AG04450 (cell line): ENCODE measurements at regions of chr10 and their contacts with region 1.

Region 1: GRCh38 chr10:31864834-31865518 is 63.7 kb downstream of the ARHGAP12 start:
- DNase-seq: no peak
- H3K4me3 ChIP-seq: no peak overlapping the region
- H3K27ac ChIP-seq: no peak overlapping the region
- H3K27me3 ChIP-seq: no peaks in the 10 kb centered on the region
- CTCF ChIP-seq: no peak

Region 2: DNA sequence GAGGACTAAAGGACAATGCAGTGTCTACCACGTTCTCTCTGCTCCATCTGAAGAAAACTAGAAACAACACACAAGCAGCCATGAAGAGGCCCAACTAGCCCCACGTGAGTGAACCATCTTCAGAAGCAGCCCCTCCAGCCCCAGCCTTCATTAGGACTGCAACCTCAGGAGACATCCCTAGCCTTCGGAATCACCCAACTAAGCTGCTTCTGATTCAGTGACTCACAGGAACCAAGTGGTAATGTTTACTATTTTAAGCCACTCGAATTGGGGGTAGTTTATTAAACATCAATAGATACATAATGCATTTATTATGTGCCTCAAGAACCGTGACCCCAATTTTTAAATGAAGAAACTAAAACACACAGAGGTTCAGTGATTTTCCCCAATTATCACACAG is 41.1 kb after region 1 on chr10:
- CTCF ChIA-PET with region 1: no interaction called
- POLR2A ChIA-PET with region 1: no interaction called
- DNase-seq: no peak
- H3K4me3 ChIP-seq: no peak overlapping the region
- H3K27ac ChIP-seq: no peak overlapping the region
- H3K27me3 ChIP-seq: no peaks in the 10 kb centered on the region
- CTCF ChIP-seq: no peak

Region 3: DNA sequence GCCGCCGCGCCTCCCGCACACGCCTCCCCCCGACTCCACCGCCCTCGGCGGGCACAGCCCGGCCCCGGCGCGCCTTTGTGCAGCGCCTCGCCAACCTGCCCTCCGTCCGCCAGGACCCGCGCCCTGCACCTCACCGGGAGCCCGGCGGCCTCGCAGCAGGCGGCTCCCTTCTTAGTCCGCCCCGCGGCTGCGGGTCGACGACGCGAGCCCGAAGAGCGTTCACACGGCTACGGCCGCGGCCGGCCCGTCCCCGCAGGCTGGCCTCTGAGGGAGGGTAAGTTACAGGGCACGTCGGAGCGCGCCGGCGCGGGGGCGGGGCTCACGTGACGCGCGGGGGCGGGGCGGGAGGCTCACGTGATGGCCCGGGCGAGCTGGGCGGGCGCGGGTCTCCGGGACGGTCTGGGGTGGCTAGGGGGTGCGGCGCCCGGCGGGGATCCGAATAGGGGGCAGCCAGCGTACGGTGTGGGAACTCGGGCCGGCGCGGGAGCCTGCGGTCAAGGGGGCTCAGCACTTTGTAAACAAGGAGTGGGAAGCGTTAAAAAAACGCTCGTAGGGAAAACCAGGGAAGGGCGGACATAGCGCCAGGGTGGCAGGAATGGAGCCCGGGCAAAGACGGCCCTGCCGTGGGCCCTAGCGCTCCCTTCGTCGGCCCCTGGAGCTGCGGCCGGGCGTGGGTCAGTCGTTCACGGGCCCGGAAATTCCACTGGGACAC is 63.7 kb after region 1 on chr10 and contains the start of gene ARHGAP12:
- CTCF ChIA-PET with region 1: interaction called, 19 read pairs
- POLR2A ChIA-PET with region 1: interaction called, 7 read pairs
- DNase-seq: peak; percentile 37
- H3K4me3 ChIP-seq: peak within 1 kb of the TSS; percentile 83
- H3K27ac ChIP-seq: peak within 1 kb of the TSS; percentile 91
- H3K27me3 ChIP-seq: no peaks in the 10 kb centered on the region
- CTCF ChIP-seq: no peak
- polyA plus RNA-seq, gene ARHGAP12: 19.2 and 26.3 TPM in 2 replicates

Region 4: DNA sequence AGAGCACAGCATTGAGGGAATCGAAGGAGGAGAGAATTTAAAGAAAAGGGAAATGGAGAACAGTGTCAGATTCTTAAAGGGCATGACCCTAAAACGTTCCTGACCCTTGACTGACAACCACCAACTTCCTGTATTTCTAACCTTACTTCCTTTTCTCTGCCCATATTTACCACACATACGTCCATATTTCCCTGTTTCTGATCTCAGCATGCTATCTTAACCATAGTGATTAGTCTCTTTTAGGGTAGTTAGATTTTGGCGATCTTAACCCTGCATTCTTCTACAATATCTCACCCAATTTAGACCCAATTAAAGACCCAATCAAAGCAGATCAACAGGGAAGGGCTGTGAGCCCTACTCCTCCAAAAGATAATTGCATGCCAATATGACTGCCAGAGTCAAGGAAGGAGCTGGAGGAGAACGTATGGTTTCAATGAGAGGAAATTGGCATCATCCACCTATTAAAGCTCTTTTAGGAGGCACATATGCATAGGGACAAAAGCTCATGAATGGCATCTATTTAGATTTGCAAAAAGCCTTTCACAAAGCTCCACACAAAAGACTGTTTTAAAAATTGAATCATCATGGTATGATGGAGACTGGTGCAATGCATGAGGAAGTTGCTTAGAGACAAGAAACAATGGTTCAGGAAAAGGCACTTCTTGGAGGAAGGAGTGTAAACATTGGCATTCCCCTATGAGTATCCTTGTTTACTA is 112.6 kb after region 1 on chr10:
- CTCF ChIA-PET with region 1: no interaction called
- POLR2A ChIA-PET with region 1: no interaction called
- DNase-seq: no peak
- H3K4me3 ChIP-seq: no peak overlapping the region
- H3K27ac ChIP-seq: no peak overlapping the region
- H3K27me3 ChIP-seq: no peaks in the 10 kb centered on the region
- CTCF ChIP-seq: no peak

Region 5: DNA sequence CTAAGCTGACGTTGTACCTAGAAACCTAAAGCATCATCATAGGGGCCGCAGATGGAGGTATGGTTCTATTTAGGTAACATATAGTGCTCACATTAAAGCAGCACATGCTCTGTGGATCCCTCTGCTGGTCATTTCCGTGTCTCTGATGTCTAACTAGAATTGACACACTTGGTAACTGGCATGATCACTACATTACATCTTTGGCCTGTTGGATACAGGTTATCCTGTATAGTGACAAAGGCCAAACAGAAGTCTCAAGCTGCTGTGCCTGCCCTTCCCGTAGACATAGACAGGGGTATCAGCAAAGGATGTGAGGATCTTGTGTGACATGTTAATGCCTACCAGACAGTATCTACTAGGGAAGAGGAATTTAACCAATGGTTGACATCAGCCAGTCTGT is 140.1 kb after region 1 on chr10:
- CTCF ChIA-PET with region 1: interaction called, 37 read pairs
- POLR2A ChIA-PET with region 1: no interaction called
- DNase-seq: peak; percentile 10
- H3K4me3 ChIP-seq: no peak overlapping the region
- H3K27ac ChIP-seq: no peak overlapping the region
- H3K27me3 ChIP-seq: no peaks in the 10 kb centered on the region
- CTCF ChIP-seq: peak; percentile 74

Region 6: DNA sequence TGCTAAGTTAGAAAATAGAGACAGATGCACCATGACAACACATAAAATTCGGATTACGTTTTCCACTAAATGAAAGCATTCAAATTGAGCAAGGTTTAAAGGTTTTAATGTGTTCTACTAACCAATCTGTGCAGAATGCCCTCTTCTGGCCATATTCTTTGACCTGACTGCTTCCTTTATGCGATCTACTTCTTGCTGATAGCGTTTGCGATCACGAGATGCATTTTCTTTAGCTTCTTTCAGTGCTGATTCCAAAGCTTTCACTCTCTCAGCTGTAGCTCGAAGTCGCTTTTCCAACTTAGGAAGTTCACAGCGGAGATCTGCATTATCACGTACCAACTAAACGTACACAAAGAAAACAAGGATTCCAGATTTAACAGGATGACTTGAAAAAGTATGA is 152.0 kb after region 1 on chr10:
- CTCF ChIA-PET with region 1: interaction called, 11 read pairs
- POLR2A ChIA-PET with region 1: no interaction called
- DNase-seq: no peak
- H3K4me3 ChIP-seq: no peak overlapping the region
- H3K27ac ChIP-seq: no peak overlapping the region
- H3K27me3 ChIP-seq: no peaks in the 10 kb centered on the region
- CTCF ChIP-seq: no peak